SK-N-SH (cell line): ENCODE measurements at regions of chr6 and their contacts with region 1.

Region 1: GRCh38 chr6:41602864-41603608 is 35.2 kb upstream of the MDFI start:
- DNase-seq: peak; percentile 90
- H3K4me3 ChIP-seq: peak overlapping the region; percentile 17 to 54; a peak in 3 of 4 replicates
- H3K27ac ChIP-seq: peak overlapping the region; percentile 3 to 36; a peak in 1 of 4 replicates
- H3K4me1 ChIP-seq: peaks cover 0 to 7% of the 10 kb centered on the region in 2 experiments; a peak in 1 of 4 replicates
- H3K27me3 ChIP-seq: no peaks in the 10 kb centered on the region
- CTCF ChIP-seq: peak; percentile 95
- EP300 ChIP-seq: no peak
- RAD21 ChIP-seq: peak; percentile 93

Region 2: DNA sequence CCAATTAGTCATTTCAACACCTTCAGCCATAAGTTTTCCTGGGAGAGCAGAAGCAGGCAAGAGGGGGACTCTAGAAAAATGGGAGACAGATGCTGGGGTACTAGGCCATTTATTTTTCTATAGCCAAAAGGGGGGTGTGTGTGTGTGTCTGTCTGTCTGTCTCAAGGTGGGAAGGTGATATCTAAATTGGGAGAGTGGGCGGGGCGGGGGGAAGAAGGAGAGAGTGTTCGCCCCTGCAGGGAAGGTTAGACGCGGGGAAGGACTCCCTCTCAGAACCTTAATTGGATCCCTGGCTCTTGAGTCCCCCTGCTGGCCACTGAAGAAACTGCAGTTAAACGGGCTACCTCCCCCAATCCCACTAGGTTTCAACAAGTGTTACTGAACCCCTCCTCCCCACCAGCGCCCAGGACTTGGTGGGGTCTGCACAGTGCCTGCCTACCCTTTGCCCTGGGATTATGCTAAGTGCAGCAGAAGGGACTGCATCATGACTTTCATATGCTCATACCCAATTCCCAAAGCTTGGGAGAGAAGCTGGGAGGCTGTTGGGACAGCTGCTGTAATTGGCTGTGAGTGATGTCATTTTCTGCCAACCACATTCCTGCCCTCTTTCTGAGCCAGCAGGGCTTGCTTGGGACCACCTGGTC is 11.1 kb before region 1 on chr6:
- CTCF ChIA-PET with region 1: interaction called, 11 read pairs
- POLR2A ChIA-PET with region 1: no interaction called
- DNase-seq: peak; percentile 92
- H3K4me3 ChIP-seq: peak overlapping the region in 1 of 2 experiments; percentile 28; a peak in 1 of 4 replicates
- H3K27ac ChIP-seq: no peak overlapping the region
- H3K4me1 ChIP-seq: peaks cover 0 to 27% of the 10 kb centered on the region in 2 experiments; a peak in 1 of 4 replicates
- H3K27me3 ChIP-seq: no peaks in the 10 kb centered on the region
- CTCF ChIP-seq: peak; percentile 89
- EP300 ChIP-seq: no peak
- RAD21 ChIP-seq: peak; percentile 92

Region 3: DNA sequence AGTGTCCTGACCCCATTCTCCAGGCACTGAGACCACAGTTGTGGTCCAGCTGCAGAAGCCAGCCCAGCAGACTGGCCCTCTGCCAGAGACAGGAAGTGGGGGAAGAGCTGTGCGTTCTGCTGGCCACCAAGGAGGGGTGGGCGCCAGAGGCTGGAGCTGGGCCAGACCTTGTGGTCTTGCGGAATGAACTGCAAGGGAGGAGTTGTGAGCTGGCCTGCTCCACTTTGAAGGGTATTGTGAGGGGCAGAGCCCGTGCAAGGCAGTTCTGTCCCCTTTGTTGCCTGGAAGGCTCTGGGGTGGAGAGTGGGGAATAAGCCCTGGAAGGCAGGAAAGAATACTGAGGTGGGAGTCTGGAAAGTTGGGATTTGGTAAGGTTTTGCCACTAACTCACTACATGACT is 31.6 kb after region 1 on chr6:
- CTCF ChIA-PET with region 1: interaction called, 17 read pairs
- POLR2A ChIA-PET with region 1: no interaction called
- DNase-seq: peak; percentile 90
- H3K4me3 ChIP-seq: no peak overlapping the region
- H3K27ac ChIP-seq: peak overlapping the region in 1 of 2 experiments; percentile 7; a peak in 2 of 4 replicates
- H3K4me1 ChIP-seq: peaks cover 0 to 29% of the 10 kb centered on the region in 2 experiments; a peak in 1 of 4 replicates
- H3K27me3 ChIP-seq: peaks cover 5% of the 10 kb centered on the region; the same call in 1 of the 2 replicates
- CTCF ChIP-seq: no peak
- EP300 ChIP-seq: no peak; a peak in 1 of 4 replicates
- RAD21 ChIP-seq: no peak

Region 4: DNA sequence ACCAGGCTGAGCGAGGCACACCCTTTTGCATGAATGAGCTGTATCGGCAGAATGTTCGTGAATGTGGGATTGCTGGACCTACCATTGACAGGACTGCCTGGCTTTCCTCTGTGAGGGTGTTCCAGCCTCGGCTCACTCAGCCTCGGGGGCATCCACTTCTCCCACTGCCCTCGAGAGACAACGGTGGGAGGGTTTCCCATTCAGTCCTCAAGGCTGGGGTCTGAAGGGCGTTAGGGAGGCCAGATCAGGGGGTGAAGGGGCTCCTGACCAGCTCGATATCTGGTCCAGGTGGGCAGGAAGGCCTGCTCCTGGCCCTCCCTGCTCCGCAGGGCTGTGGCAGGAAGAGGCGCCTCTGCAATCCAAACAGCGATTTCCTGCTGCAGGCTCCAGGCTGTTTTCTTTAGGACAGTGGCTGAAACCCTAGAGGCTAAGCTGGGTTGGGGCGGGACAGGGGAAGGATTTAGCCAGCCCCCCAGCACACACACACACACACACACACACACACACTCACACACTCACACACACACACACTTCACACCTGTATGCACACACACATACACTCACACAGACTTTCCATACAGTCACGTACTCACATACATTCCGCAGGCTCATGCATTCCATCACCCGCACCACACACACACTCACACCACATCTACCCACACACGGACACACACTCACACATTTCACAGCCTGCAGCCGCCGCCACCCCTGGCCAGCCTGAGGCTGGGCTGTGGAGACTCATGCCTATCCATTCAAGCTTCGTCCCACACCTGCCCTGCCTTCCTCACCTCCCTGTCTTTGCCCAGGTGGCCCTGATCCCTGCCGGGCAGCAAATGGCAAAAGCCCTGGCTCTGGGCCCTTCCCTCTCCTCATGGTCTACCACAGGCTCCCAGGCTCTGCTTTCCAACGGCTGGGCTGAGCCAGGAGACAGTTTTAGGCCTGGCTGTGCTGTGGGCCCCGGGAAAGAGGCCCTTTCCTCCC is 53.0 kb after region 1 on chr6:
- CTCF ChIA-PET with region 1: interaction called, 10 read pairs
- POLR2A ChIA-PET with region 1: no interaction called
- DNase-seq: no peak
- H3K4me3 ChIP-seq: no peak overlapping the region
- H3K27ac ChIP-seq: no peak overlapping the region
- H3K4me1 ChIP-seq: peaks cover 0 to 8% of the 10 kb centered on the region in 2 experiments; a peak in 1 of 4 replicates
- H3K27me3 ChIP-seq: no peaks in the 10 kb centered on the region
- CTCF ChIP-seq: no peak
- EP300 ChIP-seq: no peak
- RAD21 ChIP-seq: no peak

Region 5: GRCh38 chr6:41887331-41887751 is 284.3 kb after region 1 on chr6:
- CTCF ChIA-PET with region 1: no interaction called
- POLR2A ChIA-PET with region 1: no interaction called
- DNase-seq: no peak
- H3K4me3 ChIP-seq: no peak overlapping the region
- H3K27ac ChIP-seq: no peak overlapping the region
- H3K4me1 ChIP-seq: peaks cover 0 to 4% of the 10 kb centered on the region in 2 experiments; a peak in 2 of 4 replicates
- H3K27me3 ChIP-seq: no peaks in the 10 kb centered on the region
- CTCF ChIP-seq: no peak
- EP300 ChIP-seq: no peak
- RAD21 ChIP-seq: no peak